Body of pancreas (tissue), 4 donors: ENCODE measurements at regions of chr10 and their contacts with region 1.

Region 1: GRCh38 chr10:95601116-95601719 is 40.0 kb upstream of the SORBS1 start:
- DNase-seq: peak; percentile 85 to 90 (median 88)
- ATAC-seq: peak; percentile 96
- H3K4me3 ChIP-seq: no peak overlapping the region
- H3K27ac ChIP-seq: no peak overlapping the region
- H3K4me1 ChIP-seq: no peaks in the 10 kb centered on the region
- H3K27me3 ChIP-seq: no peaks in the 10 kb centered on the region
- CTCF ChIP-seq: peak; percentile 74 to 99 (median 98)
- POLR2A ChIP-seq: no peak

Region 2: GRCh38 chr10:95374597-95375209 is 226.5 kb before region 1 on chr10:
- intact Hi-C with region 1: loop called (anchors 10 kb)
- DNase-seq: peak; percentile 74 to 81 (median 78)
- ATAC-seq: peak; percentile 92
- H3K4me3 ChIP-seq: no peak overlapping the region
- H3K27ac ChIP-seq: no peak overlapping the region
- H3K4me1 ChIP-seq: no peaks in the 10 kb centered on the region
- H3K27me3 ChIP-seq: no peaks in the 10 kb centered on the region
- CTCF ChIP-seq: peak; percentile 46 to 94 (median 85)
- POLR2A ChIP-seq: no peak

Region 3: GRCh38 chr10:95430231-95430951 is 170.8 kb before region 1 on chr10:
- intact Hi-C with region 1: loop called (anchors 5 kb)
- DNase-seq: peak; percentile 62 to 71 (median 68)
- ATAC-seq: peak; percentile 85
- H3K4me3 ChIP-seq: no peak overlapping the region
- H3K27ac ChIP-seq: no peak overlapping the region
- H3K4me1 ChIP-seq: peaks cover 16% of the 10 kb centered on the region
- H3K27me3 ChIP-seq: no peaks in the 10 kb centered on the region
- CTCF ChIP-seq: peak; percentile 93 to 99 (median 97)
- POLR2A ChIP-seq: no peak

Region 4: DNA sequence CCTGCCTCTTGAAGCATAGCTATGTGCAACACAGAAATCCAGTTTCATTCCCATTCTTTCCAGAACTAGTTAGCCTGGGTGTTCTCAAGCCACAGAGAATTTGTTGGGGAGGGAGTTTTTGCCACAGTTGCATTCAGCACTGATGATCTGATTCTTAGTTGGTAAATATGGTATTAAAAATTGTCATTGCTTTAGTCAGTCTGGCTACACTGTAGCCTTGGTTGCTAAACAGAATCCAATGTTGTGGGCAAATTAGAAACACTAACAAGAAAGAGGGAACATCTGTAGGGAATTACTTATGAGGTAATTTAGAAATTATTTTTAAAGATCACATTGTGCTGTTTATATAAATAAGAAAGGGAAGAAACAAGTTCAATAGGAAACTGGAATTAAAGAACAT is 249.6 kb after region 1 on chr10:
- intact Hi-C with region 1: no loop called
- DNase-seq: no peak
- ATAC-seq: no peak
- H3K4me3 ChIP-seq: no peak overlapping the region
- H3K27ac ChIP-seq: no peak overlapping the region
- H3K4me1 ChIP-seq: no peaks in the 10 kb centered on the region
- H3K27me3 ChIP-seq: no peaks in the 10 kb centered on the region
- CTCF ChIP-seq: no peak
- POLR2A ChIP-seq: no peak